ENCODE measurements at regions of chr7 and their contacts with region 1.

Region 1: GRCh38 chr7:27160546-27161213 is 4.2 kb upstream of the HOXA7 start:
- DNase-seq: peak; percentile 81 to 88 (median 84)
- ATAC-seq: peak; percentile 89
- H3K4me3 ChIP-seq: peak overlapping the region; percentile 14
- H3K27ac ChIP-seq: no peak overlapping the region
- H3K4me1 ChIP-seq: peaks cover 0 to 26% of the 10 kb centered on the region in 2 experiments; a peak in 2 of 5 replicates
- H3K27me3 ChIP-seq: peaks cover 18 to 76% of the 10 kb centered on the region in 2 experiments
- CTCF ChIP-seq: peak; percentile 87 to 91 (median 91)
- EP300 ChIP-seq: no peak
- POLR2A ChIP-seq: no peak
- RAD21 ChIP-seq: peak; percentile 89 to 91

Region 2: GRCh38 chr7:26078437-26079336 is 1082.0 kb before region 1 on chr7:
- CTCF ChIA-PET with region 1: no interaction called
- POLR2A ChIA-PET with region 1: no interaction called
- in situ Hi-C with region 1: loop called (anchors 25 kb)
- intact Hi-C with region 1: no loop called
- DNase-seq: peak; percentile 16 to 69 (median 38)
- ATAC-seq: peak; percentile 93
- H3K4me3 ChIP-seq: no peak overlapping the region
- H3K27ac ChIP-seq: no peak overlapping the region
- H3K4me1 ChIP-seq: peaks cover 0 to 4% of the 10 kb centered on the region in 2 experiments; a peak in 3 of 5 replicates
- H3K27me3 ChIP-seq: peaks cover 9 to 22% of the 10 kb centered on the region in 2 experiments
- CTCF ChIP-seq: peak; percentile 62 to 69 (median 67)
- EP300 ChIP-seq: no peak
- POLR2A ChIP-seq: no peak
- RAD21 ChIP-seq: peak; percentile 71 to 78

Region 3: GRCh38 chr7:26291699-26292538 is 868.8 kb before region 1 on chr7 and contains the start of gene SNX10:
- CTCF ChIA-PET with region 1: no interaction called
- POLR2A ChIA-PET with region 1: no interaction called
- in situ Hi-C with region 1: no loop called
- intact Hi-C with region 1: loop called (anchors 5 kb)
- DNase-seq: peak; percentile 73 to 89 (median 78)
- ATAC-seq: peak; percentile 98
- H3K4me3 ChIP-seq: peak within 1 kb of the TSS; percentile 85
- H3K27ac ChIP-seq: peak within 1 kb of the TSS; percentile 71
- H3K4me1 ChIP-seq: peaks cover 11 to 19% of the 10 kb centered on the region in 2 experiments
- H3K27me3 ChIP-seq: no peaks in the 10 kb centered on the region
- CTCF ChIP-seq: peak; percentile 50 to 86 (median 79)
- EP300 ChIP-seq: no peak
- POLR2A ChIP-seq: peak; percentile 61; the same call in 1 of the 2 replicates
- RAD21 ChIP-seq: peak; percentile 61 to 76
- polyA plus RNA-seq, gene SNX10: 10.9 to 12.4 TPM

Region 4: DNA sequence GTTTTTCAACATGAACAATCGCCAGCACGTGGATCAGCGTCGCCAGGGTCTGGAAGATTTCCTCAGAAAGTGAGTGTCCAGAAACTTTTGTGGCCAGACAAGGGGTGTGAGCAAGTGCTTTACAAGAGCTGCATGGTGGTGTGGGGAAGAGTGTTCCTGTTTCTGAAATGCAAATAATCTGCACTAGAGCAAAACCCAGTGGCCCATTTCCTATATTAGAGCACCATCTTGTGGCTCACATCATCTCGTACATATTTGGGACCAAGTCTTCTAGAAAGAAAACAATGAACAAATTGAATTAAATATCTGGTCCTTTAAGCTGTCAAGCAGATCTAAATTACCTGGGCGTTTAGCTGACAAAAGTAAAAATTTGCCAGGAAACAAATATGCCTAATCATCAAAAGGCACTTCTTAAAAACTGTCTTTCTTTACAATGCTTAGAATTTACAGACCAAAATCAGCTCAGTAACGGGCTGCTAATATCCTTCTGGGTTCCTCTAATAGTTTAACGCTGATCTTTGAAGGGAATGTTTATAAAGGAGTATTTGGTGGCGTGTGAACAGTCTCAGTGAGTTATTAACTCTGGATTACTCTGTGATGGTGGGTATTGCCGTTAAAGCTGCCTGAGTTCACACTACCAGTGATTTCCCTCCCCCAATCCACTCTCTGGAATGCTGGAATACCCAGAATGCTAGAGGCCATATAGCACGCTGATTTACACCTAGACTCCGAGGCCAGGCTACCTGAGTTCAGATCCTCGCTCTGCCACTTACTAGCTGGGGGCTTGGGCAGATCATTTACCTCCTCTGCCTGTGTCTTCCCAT is 795.4 kb before region 1 on chr7:
- CTCF ChIA-PET with region 1: interaction called, 16 read pairs
- POLR2A ChIA-PET with region 1: no interaction called
- in situ Hi-C with region 1: loop called (anchors 5 kb)
- intact Hi-C with region 1: loop called (anchors 2 kb)
- DNase-seq: peak; percentile 18 to 78 (median 30)
- ATAC-seq: peak; percentile 86
- H3K4me3 ChIP-seq: no peak overlapping the region
- H3K27ac ChIP-seq: no peak overlapping the region
- H3K4me1 ChIP-seq: no peaks in the 10 kb centered on the region; a peak in 1 of 5 replicates
- H3K27me3 ChIP-seq: no peaks in the 10 kb centered on the region
- CTCF ChIP-seq: peak; percentile 70 to 90 (median 71); a peak in 5 of 6 replicates
- EP300 ChIP-seq: no peak
- POLR2A ChIP-seq: no peak
- RAD21 ChIP-seq: peak; percentile 97 to 98

Region 5: DNA sequence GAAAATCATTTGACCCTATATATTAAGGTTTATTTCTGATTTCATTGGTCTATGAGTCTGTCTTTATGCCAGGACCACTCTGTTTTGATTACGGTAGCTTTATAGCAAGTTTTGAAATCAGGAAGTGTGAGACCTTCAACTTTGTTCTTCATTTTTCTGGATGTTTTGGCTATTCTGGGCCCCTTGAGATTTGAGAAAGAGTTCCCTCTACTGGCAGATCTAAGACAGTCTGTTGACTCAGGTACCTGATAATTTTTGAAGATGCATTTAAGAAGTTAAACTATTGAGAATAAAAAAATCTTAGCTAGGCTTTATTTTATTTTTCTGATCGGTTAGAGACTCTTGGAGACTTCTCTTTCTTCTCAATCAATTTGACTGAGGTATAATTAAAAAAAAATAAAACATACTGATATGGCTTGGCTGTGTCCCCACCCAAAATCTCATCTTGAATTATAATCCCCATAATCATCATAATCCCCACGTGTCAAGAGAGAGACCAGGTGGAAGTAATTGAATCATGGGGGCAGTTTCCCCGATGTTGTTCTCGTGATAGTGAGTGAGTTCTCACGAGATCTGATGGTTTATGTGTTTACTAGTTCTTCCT is 659.8 kb before region 1 on chr7:
- CTCF ChIA-PET with region 1: no interaction called
- POLR2A ChIA-PET with region 1: no interaction called
- in situ Hi-C with region 1: loop called (anchors 25 kb)
- intact Hi-C with region 1: no loop called
- DNase-seq: peak in 2 of 4 experiments; percentile 39 to 55
- ATAC-seq: peak; percentile 79
- H3K4me3 ChIP-seq: no peak overlapping the region
- H3K27ac ChIP-seq: no peak overlapping the region
- H3K4me1 ChIP-seq: peaks cover 3 to 8% of the 10 kb centered on the region in 2 experiments; a peak in 3 of 5 replicates
- H3K27me3 ChIP-seq: peaks cover 13 to 16% of the 10 kb centered on the region in 2 experiments; a peak in 4 of 5 replicates
- CTCF ChIP-seq: peak; percentile 39 to 83 (median 61); a peak in 5 of 6 replicates
- EP300 ChIP-seq: no peak
- POLR2A ChIP-seq: no peak
- RAD21 ChIP-seq: peak; percentile 86 to 89

Region 6: GRCh38 chr7:26681819-26682418 is 478.8 kb before region 1 on chr7:
- CTCF ChIA-PET with region 1: interaction called, 9 read pairs
- POLR2A ChIA-PET with region 1: interaction called, 4 read pairs
- in situ Hi-C with region 1: no loop called
- intact Hi-C with region 1: loop called (anchors 2 kb)
- DNase-seq: peak; percentile 13 to 22 (median 16)
- ATAC-seq: peak; percentile 58
- H3K4me3 ChIP-seq: no peak overlapping the region
- H3K27ac ChIP-seq: no peak overlapping the region
- H3K4me1 ChIP-seq: no peaks in the 10 kb centered on the region; a peak in 1 of 5 replicates
- H3K27me3 ChIP-seq: no peaks in the 10 kb centered on the region
- CTCF ChIP-seq: peak; percentile 38 to 66 (median 48); a peak in 5 of 6 replicates
- EP300 ChIP-seq: no peak
- POLR2A ChIP-seq: no peak
- RAD21 ChIP-seq: peak; percentile 41 to 45

Region 7: DNA sequence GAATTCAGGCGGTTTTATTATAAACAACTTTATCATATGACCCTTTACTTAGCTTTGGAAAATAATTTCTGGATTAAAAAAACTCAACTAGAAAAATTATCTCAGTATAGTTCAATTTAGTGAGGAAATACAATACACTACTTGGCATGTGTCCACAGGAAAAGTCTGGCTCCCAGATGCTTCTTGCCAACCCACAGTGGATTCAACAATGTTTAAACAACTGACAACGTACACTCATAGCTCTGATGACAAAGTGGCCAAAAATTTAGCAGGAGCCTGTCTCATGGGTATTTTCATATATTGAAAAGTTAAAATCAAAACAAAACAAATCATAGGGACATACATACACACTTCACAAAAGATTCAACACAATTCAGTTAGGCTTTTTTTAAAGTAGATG is 455.1 kb before region 1 on chr7:
- CTCF ChIA-PET with region 1: no interaction called
- POLR2A ChIA-PET with region 1: no interaction called
- in situ Hi-C with region 1: no loop called
- intact Hi-C with region 1: no loop called
- DNase-seq: no peak
- ATAC-seq: no peak
- H3K4me3 ChIP-seq: no peak overlapping the region
- H3K27ac ChIP-seq: no peak overlapping the region
- H3K4me1 ChIP-seq: no peaks in the 10 kb centered on the region
- H3K27me3 ChIP-seq: no peaks in the 10 kb centered on the region; a peak in 1 of 5 replicates
- CTCF ChIP-seq: no peak
- EP300 ChIP-seq: no peak
- POLR2A ChIP-seq: no peak
- RAD21 ChIP-seq: no peak

Region 8: DNA sequence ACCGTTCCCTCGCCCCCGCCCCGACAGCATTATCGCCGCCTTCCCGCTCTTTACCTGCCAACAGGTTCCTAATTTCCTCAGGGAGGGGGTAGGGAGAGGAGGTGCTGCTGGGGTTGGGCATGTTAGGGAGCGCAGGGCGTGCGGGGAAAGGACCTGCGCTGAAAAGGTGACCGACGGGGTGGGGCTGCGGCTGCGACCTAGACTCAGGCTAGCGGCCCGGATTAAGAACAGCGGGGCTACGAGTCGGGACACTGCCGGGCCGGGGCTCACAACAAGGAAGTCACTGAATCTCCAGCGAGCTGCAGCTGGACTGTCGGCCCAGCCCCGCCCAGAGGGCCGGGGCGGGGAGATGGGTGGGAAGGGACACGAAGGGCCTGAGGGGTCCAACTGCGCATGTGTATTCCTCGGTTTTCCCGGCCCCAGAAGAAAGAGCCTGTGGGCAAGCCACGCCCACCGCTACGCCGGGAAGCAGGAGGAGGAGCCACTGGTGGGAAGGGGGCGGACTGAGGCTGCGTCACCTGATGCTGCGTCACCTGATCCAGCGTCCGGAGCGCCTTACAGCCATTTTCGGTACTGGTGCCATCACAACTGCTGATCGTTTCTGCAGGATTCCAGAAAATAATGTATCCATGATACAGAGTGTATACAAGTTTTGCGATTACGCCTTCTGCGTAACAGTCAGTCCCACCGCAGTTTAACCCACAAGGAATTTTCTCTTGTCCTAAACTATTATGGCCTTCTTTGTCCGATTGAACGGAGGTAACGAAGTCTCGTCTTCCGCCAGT is 296.2 kb before region 1 on chr7 and contains the start of gene SKAP2:
- CTCF ChIA-PET with region 1: no interaction called
- POLR2A ChIA-PET with region 1: no interaction called
- in situ Hi-C with region 1: no loop called
- intact Hi-C with region 1: loop called (anchors 5 kb)
- DNase-seq: peak; percentile 97 to 98 (median 98)
- ATAC-seq: peak; percentile 97
- H3K4me3 ChIP-seq: peak within 1 kb of the TSS; percentile 85
- H3K27ac ChIP-seq: peak within 1 kb of the TSS; percentile 84
- H3K4me1 ChIP-seq: peaks cover 0 to 7% of the 10 kb centered on the region in 2 experiments; a peak in 1 of 5 replicates
- H3K27me3 ChIP-seq: no peaks in the 10 kb centered on the region; a peak in 1 of 5 replicates
- CTCF ChIP-seq: no peak
- EP300 ChIP-seq: no peak
- POLR2A ChIP-seq: peak; percentile 87
- RAD21 ChIP-seq: no peak
- polyA plus RNA-seq, gene SKAP2: 8.2 to 8.7 TPM

Region 9: GRCh38 chr7:27148756-27149641 is 11.7 kb before region 1 on chr7:
- CTCF ChIA-PET with region 1: no interaction called
- POLR2A ChIA-PET with region 1: no interaction called
- in situ Hi-C with region 1: no loop called
- intact Hi-C with region 1: no loop called
- DNase-seq: no peak
- ATAC-seq: no peak
- H3K4me3 ChIP-seq: no peak overlapping the region
- H3K27ac ChIP-seq: no peak overlapping the region
- H3K4me1 ChIP-seq: peaks cover 0 to 29% of the 10 kb centered on the region in 2 experiments; a peak in 2 of 5 replicates
- H3K27me3 ChIP-seq: peaks cover 55 to 92% of the 10 kb centered on the region in 2 experiments
- CTCF ChIP-seq: no peak
- EP300 ChIP-seq: no peak
- POLR2A ChIP-seq: no peak
- RAD21 ChIP-seq: no peak

Measured in K562 (cell line).